Activated CD4-positive, alpha-beta T cell treated with anti-CD3 and anti-CD28 coated beads, Interleukin-2, amount 10 ng/mL, durations not matched to agents 24 days and 14 days (primary cell): ENCODE measurements at regions of chr4 and their contacts with region 1.

Region 1: DNA sequence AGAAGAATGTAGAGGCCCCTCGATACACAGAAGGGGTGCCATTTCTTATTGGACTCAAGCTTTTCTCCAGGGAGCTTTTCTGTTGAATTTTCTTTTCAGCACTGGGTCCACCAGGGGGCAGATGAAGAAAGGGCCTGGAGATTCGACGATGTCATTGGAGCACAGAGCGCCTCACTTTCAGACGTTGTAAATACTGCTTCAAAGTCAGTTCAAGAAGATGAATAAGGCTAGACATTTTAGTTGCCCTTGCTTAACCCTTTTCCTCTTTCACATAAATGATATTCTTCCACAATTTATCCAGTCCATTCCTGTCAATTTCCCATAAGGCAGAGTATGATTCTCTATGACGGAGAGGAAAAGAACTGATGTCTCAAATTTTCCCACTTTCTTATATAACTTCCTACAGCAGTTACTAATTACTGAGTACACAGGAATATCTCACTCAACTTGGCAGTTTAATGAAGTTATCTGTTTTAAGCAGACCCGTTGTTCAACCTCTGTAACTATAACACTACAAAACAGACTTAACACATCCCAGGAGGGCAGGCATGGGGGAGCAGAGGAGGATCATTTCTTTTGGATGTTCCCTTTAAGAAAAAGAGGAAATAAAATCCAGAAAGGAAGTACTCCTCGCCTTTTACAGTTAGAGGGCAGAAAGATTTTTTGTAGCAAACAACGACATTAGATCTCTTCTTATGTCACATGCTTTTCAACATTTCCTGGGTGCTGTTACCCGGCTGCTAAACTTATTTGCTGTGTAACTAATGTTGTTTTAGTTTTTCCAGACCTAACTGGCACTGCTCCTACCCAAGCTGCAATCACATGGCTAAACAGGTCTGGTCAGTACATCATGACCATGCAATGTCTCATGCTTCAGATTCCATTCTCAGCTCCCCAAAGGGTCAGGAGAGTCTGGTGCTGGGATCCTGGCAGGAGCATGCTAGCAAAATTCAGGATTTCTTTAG is 12.2 kb upstream of the CENPU start:
- DNase-seq: peak; percentile 93
- H3K4me3 Mint-ChIP-seq: peak overlapping the region; percentile 15
- H3K27ac Mint-ChIP-seq: peak overlapping the region; percentile 32
- H3K4me1 Mint-ChIP-seq: peaks cover 10% of the 10 kb centered on the region
- H3K27me3 Mint-ChIP-seq: peaks cover 1% of the 10 kb centered on the region

Region 2: DNA sequence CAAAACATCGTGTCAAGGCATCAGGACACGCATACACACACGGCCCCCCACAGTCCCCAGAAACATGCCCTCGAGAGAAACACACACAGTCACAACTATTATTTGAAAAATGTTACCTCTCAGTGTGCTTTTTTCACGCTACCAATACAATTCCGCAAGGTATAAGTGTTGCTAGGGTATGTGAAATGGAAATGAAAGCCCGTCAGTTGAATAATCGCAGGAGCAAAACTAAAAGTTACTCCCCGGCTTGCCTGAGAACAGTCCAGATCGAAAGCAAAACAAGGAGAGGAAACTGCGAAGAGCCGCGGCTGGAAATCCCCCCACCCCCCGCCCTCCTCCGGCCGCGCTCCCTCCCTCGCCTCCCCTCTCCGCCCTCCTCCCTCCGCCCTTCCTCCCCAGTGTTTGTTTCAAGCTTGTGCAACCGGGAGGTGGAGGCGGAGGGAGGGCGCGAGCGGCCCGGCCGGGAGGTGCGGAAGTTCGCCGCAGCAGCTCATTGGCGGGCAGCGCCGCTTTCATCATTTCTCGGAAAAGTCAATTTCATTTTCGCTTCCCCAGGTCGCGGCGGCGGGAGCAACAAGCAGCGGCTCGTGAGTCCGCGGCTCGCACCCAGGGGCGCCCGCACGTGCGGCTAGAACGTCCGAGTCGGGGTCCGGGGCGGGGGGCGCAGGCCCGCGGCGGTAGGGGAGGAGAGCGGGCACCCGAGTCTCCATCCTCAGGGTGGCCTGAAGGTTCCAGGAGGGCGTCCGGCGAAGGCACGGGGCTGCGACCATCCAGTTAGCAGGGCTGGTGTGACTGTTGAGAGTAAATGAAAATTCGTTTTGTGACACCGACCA is 271.6 kb before region 1 on chr4 and contains the start of gene IRF2:
- intact Hi-C with region 1: no loop called
- DNase-seq: peak; percentile 98
- H3K4me3 Mint-ChIP-seq: peak within 1 kb of the TSS; percentile 99
- H3K27ac Mint-ChIP-seq: peak within 1 kb of the TSS; percentile 98
- H3K4me1 Mint-ChIP-seq: peaks cover 52% of the 10 kb centered on the region
- H3K27me3 Mint-ChIP-seq: no peaks in the 10 kb centered on the region
- total RNA-seq, gene IRF2: 48.7 and 50.0 TPM in 2 replicates

Region 3: DNA sequence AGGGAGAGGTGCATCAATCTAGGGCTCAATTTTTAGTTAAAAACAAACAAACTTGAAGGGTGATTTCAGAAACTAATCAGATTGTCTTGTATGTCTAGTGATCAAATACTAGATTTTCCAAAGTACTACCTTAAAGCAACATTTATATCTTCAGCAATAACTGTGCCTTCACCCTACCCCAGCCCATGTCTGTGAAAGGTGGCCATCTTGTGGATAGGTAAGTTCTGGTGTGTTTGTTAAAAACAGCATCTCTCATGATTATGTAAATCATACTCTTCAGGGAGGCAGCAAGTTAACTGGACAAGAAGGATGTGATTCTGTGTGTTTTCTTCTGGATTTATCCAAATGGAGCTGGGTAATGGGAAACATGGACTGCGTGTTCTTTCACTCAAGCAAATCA is 161.1 kb after region 1 on chr4:
- intact Hi-C with region 1: loop called (anchors 1 kb)
- DNase-seq: peak; percentile 65
- H3K4me3 Mint-ChIP-seq: no peak overlapping the region
- H3K27ac Mint-ChIP-seq: no peak overlapping the region
- H3K4me1 Mint-ChIP-seq: peaks cover 10% of the 10 kb centered on the region
- H3K27me3 Mint-ChIP-seq: peaks cover 8% of the 10 kb centered on the region

Region 4: DNA sequence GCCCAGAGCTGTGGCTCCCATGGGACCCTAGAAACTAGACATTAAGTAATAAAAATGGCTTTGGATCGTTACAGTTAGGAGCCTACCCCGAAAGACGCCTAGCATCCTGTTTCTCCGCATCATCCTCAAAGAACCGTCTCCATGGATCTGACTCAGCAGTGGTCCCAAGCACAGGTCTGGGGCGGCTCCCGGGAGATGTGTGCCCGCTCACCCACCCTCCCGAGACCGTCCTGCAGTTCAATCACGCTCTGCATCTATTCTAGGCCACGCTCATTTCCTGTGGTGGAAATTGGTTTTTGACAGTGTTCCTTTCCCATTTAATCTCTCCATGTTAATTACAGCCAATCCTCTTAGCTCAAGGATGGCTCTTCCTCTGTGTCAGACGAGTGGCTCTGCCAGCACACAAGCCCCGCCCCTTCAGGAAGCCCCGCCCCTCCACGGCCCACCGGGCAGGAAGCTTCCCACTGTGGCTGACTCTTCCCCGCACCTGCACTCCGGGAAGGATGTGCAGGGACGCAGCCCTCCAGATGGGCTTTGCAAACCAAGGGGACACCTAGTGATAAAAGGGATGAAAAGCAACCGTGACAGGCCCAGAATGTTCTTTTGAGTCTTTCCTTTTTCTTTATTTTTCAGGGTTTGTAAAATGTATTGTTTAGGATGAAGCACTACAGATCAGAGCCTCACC is 237.7 kb after region 1 on chr4:
- intact Hi-C with region 1: loop called (anchors 1 kb)
- DNase-seq: peak; percentile 83
- H3K4me3 Mint-ChIP-seq: no peak overlapping the region
- H3K27ac Mint-ChIP-seq: no peak overlapping the region
- H3K4me1 Mint-ChIP-seq: peaks cover 7% of the 10 kb centered on the region
- H3K27me3 Mint-ChIP-seq: peaks cover 9% of the 10 kb centered on the region

Region 5: GRCh38 chr4:185005216-185005819 is 259.2 kb after region 1 on chr4:
- intact Hi-C with region 1: loop called (anchors 5 kb)
- DNase-seq: peak; percentile 94
- H3K4me3 Mint-ChIP-seq: peak overlapping the region; percentile 50
- H3K27ac Mint-ChIP-seq: peak overlapping the region; percentile 26
- H3K4me1 Mint-ChIP-seq: peaks cover 6% of the 10 kb centered on the region
- H3K27me3 Mint-ChIP-seq: peaks cover 46% of the 10 kb centered on the region

Region 6: DNA sequence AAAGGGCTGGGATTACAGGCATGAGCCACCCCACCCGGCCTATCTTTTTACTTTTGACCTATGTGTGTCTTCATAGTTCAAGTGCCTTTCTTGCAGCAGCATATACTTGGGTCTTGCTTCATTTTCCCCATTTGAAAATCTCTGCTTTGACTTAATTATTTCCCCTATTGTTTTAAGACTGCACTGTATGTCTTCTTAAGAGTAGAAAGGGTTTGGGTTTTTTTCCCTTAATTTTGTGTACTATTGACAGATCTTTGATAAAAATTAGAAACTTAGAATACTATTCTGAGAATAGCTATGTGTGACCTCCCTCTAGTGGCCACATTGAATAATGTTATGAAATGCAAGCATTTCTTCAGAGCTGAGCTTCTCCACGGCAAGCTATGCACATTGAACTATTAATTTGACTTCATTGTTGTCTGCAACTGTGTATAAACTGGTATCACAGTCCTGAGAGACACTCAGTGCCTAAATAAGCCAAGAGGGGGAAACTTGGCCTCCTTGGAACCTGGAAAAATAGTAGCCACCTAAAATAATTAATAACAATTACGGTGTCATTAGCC is 388.3 kb after region 1 on chr4:
- intact Hi-C with region 1: loop called (anchors 2 kb)
- DNase-seq: peak; percentile 68
- H3K4me3 Mint-ChIP-seq: no peak overlapping the region
- H3K27ac Mint-ChIP-seq: no peak overlapping the region
- H3K4me1 Mint-ChIP-seq: no peaks in the 10 kb centered on the region
- H3K27me3 Mint-ChIP-seq: peaks cover 42% of the 10 kb centered on the region